Activated CD4-positive, alpha-beta T cell treated with anti-CD3 and anti-CD28 coated beads for 36 hours (primary cell): ENCODE measurements at regions of chr12 and their contacts with region 1.

Region 1: DNA sequence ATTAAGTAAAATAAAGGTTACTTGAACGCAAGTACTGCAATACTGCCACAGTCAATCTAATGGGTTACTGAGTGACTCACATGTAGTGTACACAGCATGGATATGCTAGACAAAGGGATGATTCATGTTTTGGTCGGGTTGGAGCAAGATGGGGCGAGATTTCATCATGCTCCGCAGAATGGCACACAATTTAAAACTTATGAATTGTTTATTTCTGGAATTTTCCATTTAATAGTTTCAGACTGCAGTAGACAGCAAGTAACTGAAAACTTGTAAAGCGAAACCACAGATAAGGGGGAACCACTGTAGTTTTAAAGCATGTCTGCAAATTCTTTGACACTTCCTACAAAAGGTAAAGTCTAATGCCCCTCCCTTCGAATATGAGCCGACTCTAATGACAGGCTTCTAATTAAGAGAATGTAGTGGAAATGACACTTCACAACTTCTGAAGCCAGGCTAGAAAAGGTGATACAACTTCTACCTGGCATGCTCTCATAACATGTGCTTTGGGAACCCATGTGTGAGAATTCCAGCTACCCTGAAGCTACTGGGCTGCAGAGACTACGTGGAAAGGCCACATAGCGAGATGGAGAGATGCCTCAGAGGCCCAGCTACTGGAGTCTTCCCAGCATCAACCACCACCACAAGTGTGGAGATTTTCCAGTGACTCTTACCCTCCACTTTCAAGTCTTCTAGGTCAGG is 13.9 kb upstream of the TCP11L2 start:
- DNase-seq: peak; percentile 72
- ATAC-seq: peak; percentile 97
- H3K4me3 Mint-ChIP-seq: no peak overlapping the region
- H3K27ac Mint-ChIP-seq: peak overlapping the region; percentile 92
- H3K4me1 Mint-ChIP-seq: peaks cover 26% of the 10 kb centered on the region
- H3K27me3 Mint-ChIP-seq: peaks cover 1% of the 10 kb centered on the region

Region 2: DNA sequence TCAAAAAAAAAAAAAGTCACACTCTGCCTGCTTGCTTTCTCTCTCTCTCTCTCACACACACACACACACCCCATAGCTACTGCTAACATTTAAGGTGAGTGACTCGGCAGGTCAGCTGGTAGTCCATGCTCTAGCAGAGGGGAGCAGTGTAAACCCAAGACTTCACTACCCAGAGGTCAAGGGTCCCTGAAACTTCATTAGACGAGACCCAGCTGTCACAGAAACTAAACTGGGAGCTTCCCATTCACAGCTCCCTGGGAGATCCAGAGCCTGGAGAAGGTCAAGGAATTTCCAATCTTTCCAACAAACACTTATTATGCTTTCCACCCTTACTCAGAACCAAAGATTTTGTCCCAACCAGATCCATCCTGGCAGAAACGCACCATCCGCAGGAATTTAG is 74.1 kb before region 1 on chr12:
- CTCF ChIA-PET with region 1: no interaction called
- POLR2A ChIA-PET with region 1: no interaction called
- intact Hi-C with region 1: no loop called
- DNase-seq: no peak
- ATAC-seq: no peak
- H3K4me3 Mint-ChIP-seq: no peak overlapping the region
- H3K27ac Mint-ChIP-seq: no peak overlapping the region
- H3K4me1 Mint-ChIP-seq: no peaks in the 10 kb centered on the region
- H3K27me3 Mint-ChIP-seq: peaks cover 31% of the 10 kb centered on the region

Region 3: DNA sequence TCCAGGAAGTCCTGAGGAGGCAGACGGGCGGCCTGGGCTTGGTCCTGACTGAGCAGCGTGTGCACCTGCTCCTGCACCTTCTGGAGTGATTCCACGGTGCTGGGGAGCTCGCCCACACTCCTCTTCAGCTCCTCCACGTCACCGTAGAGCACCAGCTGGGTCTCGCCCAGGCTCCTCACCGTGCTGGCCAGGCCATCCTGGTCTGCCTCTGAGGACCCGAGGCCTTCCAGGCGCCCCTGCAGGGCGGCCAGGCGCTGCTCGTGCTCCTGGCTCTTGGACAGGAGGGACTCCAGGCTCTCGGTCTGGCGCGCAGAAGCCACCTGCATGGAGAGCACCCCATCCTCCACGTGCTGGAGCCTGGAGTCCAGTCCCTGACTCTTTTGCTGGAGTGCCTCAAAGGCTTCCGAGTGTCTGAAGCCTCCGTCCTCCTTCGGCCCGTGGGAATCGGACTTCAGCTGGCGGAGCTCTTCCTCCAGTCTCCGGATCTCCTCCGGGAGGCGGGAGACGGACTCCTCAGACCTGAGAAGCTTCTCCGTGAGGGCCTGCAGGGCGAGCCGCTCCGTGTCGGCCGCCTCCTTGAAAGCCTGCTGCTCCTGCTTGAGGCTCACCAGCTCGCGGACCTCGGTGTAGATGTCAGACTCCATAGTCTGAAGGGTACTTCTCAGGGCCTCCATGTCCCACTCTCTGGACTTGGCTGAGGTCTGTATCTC is 49.2 kb before region 1 on chr12:
- CTCF ChIA-PET with region 1: no interaction called
- POLR2A ChIA-PET with region 1: no interaction called
- intact Hi-C with region 1: no loop called
- DNase-seq: no peak
- ATAC-seq: no peak
- H3K4me3 Mint-ChIP-seq: no peak overlapping the region
- H3K27ac Mint-ChIP-seq: no peak overlapping the region
- H3K4me1 Mint-ChIP-seq: peaks cover 2% of the 10 kb centered on the region
- H3K27me3 Mint-ChIP-seq: no peaks in the 10 kb centered on the region

Region 4: DNA sequence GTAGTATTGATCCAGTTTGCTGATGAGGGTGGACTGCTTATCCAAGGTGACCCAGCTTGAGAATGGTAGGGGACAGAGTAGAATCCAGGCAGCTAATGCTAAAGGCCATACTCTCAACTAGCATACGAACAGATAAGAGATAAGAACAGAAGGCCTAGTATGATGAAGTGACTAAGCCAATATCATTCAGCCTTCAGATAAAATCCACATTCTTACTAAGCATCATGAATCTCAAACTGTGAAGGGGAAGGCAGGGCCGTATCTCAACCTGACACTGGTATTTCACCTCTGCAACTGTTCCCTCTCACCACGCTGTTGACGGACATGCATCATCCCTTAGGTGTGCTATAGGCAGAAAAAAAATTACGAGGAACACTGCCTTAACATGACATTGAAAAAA is 32.7 kb before region 1 on chr12:
- CTCF ChIA-PET with region 1: no interaction called
- POLR2A ChIA-PET with region 1: no interaction called
- intact Hi-C with region 1: no loop called
- DNase-seq: no peak
- ATAC-seq: no peak
- H3K4me3 Mint-ChIP-seq: no peak overlapping the region
- H3K27ac Mint-ChIP-seq: no peak overlapping the region
- H3K4me1 Mint-ChIP-seq: no peaks in the 10 kb centered on the region
- H3K27me3 Mint-ChIP-seq: no peaks in the 10 kb centered on the region

Region 5: DNA sequence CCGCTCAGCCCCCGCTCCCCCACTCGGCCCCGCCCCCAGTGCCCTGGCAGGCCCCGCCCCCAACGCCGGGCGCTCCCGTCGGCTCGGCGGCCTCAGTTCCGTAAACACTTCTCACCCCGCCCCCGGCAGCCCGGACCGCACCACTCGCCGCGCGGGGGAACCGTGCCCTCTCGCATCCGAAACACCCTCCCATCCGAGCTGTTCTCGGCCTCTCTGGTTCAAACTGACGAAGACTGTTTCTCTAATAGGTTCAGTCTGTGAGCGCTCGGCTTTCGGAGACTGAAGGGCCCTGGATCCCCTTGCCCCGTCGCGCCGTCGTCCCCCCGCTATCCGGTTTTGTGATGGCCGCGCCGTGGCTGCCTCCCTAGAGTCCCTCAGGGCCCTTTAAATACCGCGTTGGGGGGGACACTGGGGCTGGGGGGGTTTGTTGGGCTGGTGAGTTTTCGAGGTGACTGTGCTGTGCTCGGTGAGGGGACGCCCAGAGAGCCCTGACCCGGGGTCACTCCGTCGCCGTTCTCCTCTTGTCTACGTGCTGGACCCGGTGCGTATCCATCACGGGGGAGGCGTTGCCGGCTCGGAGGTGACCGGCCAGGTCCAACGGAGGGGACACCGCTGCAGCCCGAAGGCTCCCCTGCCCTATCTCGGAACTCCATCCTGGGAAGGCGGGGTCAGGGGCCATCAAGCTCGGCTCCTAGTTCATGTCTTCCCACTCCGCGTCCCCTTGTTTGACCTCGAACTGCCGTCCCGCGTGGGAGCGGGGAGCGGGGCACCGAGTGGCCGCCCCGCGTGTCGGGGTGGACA is 14.0 kb after region 1 on chr12 and contains the start of gene TCP11L2:
- CTCF ChIA-PET with region 1: interaction called, 6 read pairs
- POLR2A ChIA-PET with region 1: interaction called, 3 read pairs
- intact Hi-C with region 1: loop called in 1 of 2 experiments (anchors 1 kb)
- DNase-seq: peak; percentile 94
- ATAC-seq: peak; percentile 67
- H3K4me3 Mint-ChIP-seq: peak within 1 kb of the TSS; percentile 78
- H3K27ac Mint-ChIP-seq: peak within 1 kb of the TSS; percentile 99
- H3K4me1 Mint-ChIP-seq: peaks cover 59% of the 10 kb centered on the region
- H3K27me3 Mint-ChIP-seq: no peaks in the 10 kb centered on the region
- total RNA-seq, gene TCP11L2: 8.6 to 11.8 TPM

Region 6: GRCh38 chr12:106329231-106329982 is 40.8 kb after region 1 on chr12:
- CTCF ChIA-PET with region 1: no interaction called
- POLR2A ChIA-PET with region 1: no interaction called
- intact Hi-C with region 1: no loop called
- DNase-seq: no peak
- ATAC-seq: no peak
- H3K4me3 Mint-ChIP-seq: no peak overlapping the region
- H3K27ac Mint-ChIP-seq: no peak overlapping the region
- H3K4me1 Mint-ChIP-seq: peaks cover 7% of the 10 kb centered on the region
- H3K27me3 Mint-ChIP-seq: no peaks in the 10 kb centered on the region